ENCODE measurements at regions of chr12 and their contacts with region 1.

Region 1: GRCh38 chr12:111298582-111299436 is 70.1 kb downstream of the PHETA1 start:
- DNase-seq: peak; percentile 90
- H3K4me3 ChIP-seq: peak overlapping the region in 1 of 2 experiments; percentile 35; a peak in 1 of 4 replicates
- H3K27ac ChIP-seq: no peak overlapping the region
- H3K4me1 ChIP-seq: peaks cover 0 to 3% of the 10 kb centered on the region in 2 experiments; a peak in 1 of 4 replicates
- H3K27me3 ChIP-seq: no peaks in the 10 kb centered on the region; the same call in 1 of the 2 replicates
- CTCF ChIP-seq: peak; percentile 80
- EP300 ChIP-seq: no peak
- RAD21 ChIP-seq: peak; percentile 84

Region 2: DNA sequence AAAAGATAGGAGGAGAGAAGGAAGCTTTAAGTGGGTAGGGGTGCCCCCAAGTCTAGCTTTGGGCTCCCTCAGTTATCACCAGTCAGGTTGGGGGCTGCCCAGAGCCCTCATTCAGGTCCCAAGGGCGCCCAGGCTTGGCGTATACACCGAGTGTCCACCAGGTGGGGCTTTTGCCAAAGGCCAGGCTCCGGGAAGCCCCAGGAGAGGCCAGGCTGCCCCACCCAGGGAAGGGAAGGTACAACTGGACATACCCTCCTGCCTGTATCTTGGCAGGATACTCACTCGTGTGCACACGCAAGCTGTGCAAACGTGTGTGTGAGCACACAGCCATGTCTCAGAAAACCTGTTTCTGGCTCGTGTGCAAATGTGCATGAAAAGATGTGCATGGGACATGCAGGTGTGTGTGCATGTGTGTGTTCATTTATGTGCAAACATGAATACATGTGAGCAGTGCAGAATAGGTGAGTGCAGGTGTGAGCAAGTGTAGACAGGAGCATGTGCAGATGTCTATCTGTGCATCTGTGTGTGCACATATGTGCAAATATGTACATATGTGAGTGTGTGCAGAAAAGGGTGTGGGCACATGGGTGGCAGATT is 274.5 kb before region 1 on chr12:
- CTCF ChIA-PET with region 1: interaction called, 75 read pairs
- POLR2A ChIA-PET with region 1: no interaction called
- DNase-seq: peak; percentile 83
- H3K4me3 ChIP-seq: peak overlapping the region in 1 of 2 experiments; percentile 41; a peak in 1 of 4 replicates
- H3K27ac ChIP-seq: no peak overlapping the region
- H3K4me1 ChIP-seq: no peaks in the 10 kb centered on the region; a peak in 1 of 4 replicates
- H3K27me3 ChIP-seq: 0 out of 2 replicates have a peak, but pooled peaks cover 8% of the 10 kb centered on the region
- CTCF ChIP-seq: peak; percentile 70
- EP300 ChIP-seq: no peak
- RAD21 ChIP-seq: peak; percentile 90

Region 3: DNA sequence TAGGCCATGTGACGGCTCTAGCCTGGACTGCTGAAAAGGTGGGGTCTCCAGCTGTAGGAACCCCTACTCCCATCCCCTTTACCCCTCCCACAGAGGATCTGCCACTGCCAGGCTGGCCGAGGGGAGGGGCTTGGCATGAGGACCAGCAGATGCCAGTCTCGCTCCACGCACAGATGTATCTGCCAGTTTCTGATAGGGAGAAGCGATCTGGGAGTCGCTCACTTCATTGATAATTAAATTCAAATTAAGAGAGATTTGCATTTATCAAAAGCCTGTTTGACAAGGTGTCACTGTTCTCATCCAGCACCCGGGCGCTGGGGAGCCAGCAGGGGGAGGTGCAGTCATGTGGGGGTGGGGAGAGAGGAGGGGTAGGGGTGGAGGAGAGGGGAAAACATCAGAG is 160.8 kb before region 1 on chr12:
- CTCF ChIA-PET with region 1: interaction called, 48 read pairs
- POLR2A ChIA-PET with region 1: no interaction called
- DNase-seq: peak; percentile 67
- H3K4me3 ChIP-seq: no peak overlapping the region
- H3K27ac ChIP-seq: no peak overlapping the region
- H3K4me1 ChIP-seq: peaks cover 0 to 8% of the 10 kb centered on the region in 2 experiments; a peak in 1 of 4 replicates
- H3K27me3 ChIP-seq: no peaks in the 10 kb centered on the region
- CTCF ChIP-seq: 0 out of 2 replicates have a peak, but pooled peaks have one; percentile 8
- EP300 ChIP-seq: no peak
- RAD21 ChIP-seq: peak; percentile 77

Region 4: DNA sequence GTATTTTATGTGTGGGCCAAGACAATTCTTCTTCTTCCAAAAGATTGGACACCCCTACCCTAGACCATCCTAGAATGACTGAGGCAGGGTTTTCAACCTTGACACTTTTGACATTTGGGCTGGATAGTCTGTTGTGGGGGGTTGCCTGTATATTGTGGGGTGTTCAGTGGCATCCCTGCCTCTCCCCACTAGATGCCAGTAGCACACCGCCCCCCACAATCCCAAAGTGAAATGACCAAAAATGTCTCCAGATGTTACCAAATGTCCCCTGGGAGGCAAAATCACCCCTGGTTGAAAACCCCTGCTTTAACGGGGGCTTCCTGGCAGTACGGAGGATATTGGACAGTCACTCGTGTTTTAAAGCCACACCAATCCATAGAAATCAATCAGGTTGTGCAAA is 149.5 kb before region 1 on chr12:
- CTCF ChIA-PET with region 1: interaction called, 39 read pairs
- POLR2A ChIA-PET with region 1: no interaction called
- DNase-seq: no peak
- H3K4me3 ChIP-seq: no peak overlapping the region
- H3K27ac ChIP-seq: no peak overlapping the region
- H3K4me1 ChIP-seq: peaks cover 0 to 12% of the 10 kb centered on the region in 2 experiments; a peak in 2 of 4 replicates
- H3K27me3 ChIP-seq: no peaks in the 10 kb centered on the region
- CTCF ChIP-seq: no peak
- EP300 ChIP-seq: no peak
- RAD21 ChIP-seq: peak; percentile 75

Region 5: GRCh38 chr12:111211910-111212757 is 86.7 kb before region 1 on chr12:
- CTCF ChIA-PET with region 1: interaction called, 21 read pairs
- POLR2A ChIA-PET with region 1: no interaction called
- DNase-seq: no peak
- H3K4me3 ChIP-seq: no peak overlapping the region
- H3K27ac ChIP-seq: peak overlapping the region in 1 of 2 experiments; percentile 99; a peak in 2 of 4 replicates
- H3K4me1 ChIP-seq: peaks cover 0 to 62% of the 10 kb centered on the region in 2 experiments; a peak in 2 of 4 replicates
- H3K27me3 ChIP-seq: no peaks in the 10 kb centered on the region
- CTCF ChIP-seq: no peak
- EP300 ChIP-seq: no peak
- RAD21 ChIP-seq: no peak

Region 6: GRCh38 chr12:111268738-111269572 is 29.9 kb before region 1 on chr12:
- CTCF ChIA-PET with region 1: interaction called, 50 read pairs
- POLR2A ChIA-PET with region 1: no interaction called
- DNase-seq: peak; percentile 60
- H3K4me3 ChIP-seq: no peak overlapping the region
- H3K27ac ChIP-seq: no peak overlapping the region; a peak in 1 of 4 replicates
- H3K4me1 ChIP-seq: peaks cover 0 to 3% of the 10 kb centered on the region in 2 experiments; a peak in 1 of 4 replicates
- H3K27me3 ChIP-seq: no peaks in the 10 kb centered on the region; the same call in 1 of the 2 replicates
- CTCF ChIP-seq: peak; percentile 63
- EP300 ChIP-seq: no peak
- RAD21 ChIP-seq: peak; percentile 34; the same call in 1 of the 2 replicates

Region 7: GRCh38 chr12:111287125-111287900 is 11.5 kb before region 1 on chr12:
- CTCF ChIA-PET with region 1: interaction called, 30 read pairs
- POLR2A ChIA-PET with region 1: no interaction called
- DNase-seq: no peak
- H3K4me3 ChIP-seq: no peak overlapping the region
- H3K27ac ChIP-seq: no peak overlapping the region
- H3K4me1 ChIP-seq: no peaks in the 10 kb centered on the region
- H3K27me3 ChIP-seq: no peaks in the 10 kb centered on the region
- CTCF ChIP-seq: no peak
- EP300 ChIP-seq: no peak
- RAD21 ChIP-seq: no peak

Region 8: DNA sequence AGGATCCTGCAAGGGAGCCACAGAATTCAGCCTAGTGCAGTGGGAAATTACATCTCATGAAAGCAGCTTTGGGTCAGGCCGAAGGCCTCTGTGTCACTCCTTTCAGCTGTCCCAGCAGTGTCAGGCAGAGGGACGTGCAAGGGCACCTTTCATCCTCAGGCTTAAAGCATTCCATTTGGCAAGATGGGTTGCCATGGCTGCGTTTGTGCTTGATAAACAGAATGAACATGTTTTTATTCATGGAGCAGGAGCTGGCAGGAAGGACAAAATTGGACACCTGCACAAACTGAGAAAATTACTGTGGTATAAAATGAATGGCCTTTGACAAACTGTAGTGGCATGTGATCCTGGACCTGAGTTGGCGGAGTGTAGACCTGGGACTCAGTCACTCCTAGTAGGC is 416.5 kb after region 1 on chr12:
- CTCF ChIA-PET with region 1: no interaction called
- POLR2A ChIA-PET with region 1: no interaction called
- DNase-seq: no peak
- H3K4me3 ChIP-seq: no peak overlapping the region
- H3K27ac ChIP-seq: no peak overlapping the region
- H3K4me1 ChIP-seq: no peaks in the 10 kb centered on the region
- H3K27me3 ChIP-seq: no peaks in the 10 kb centered on the region
- CTCF ChIP-seq: no peak
- EP300 ChIP-seq: no peak
- RAD21 ChIP-seq: no peak